HCT116 (cell line): ENCODE measurements at regions of chr1 and their contacts with region 1.

Region 1: DNA sequence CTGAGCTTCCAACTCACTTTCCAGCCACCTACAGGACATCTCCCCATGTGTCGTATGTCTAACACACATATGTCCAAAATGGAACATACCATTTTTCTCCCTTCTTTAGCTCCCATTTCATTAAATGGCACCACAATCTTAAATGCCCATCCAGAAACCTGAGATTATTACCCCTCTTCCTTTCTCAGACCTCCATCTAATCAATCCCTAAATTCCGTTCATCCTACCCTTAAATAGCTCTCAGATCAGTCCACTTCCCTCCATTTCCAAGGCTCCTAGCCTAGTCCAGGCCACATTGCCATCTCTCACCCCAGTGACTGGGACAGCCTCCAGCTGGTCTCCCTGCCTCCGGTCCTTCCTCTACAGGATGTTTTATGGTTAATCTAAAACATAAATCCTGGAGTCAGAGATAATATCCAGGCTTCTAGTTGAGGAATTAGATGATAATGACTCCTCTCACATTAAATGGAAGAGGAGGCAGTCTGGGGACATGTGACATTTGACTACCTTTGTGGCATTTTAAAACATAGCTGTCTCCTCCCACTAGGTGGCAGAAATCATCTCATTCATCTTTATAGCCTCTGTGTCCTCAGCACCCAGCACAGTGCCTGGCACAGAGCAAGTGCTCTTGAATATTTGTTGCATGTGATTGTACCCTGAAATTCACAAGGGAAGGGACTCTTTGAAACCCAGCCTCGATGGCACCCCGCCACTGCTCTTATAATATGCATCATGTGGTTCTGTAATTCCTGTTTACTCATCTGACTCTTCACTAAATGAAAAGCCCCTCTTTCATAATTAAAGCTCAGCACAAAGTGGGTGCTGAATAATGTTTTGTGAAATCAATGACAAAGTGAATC is 102.3 kb downstream of the TMEM53 start:
- DNase-seq: no peak
- ATAC-seq: peak; percentile 91
- H3K4me3 ChIP-seq: no peak overlapping the region
- H3K27ac ChIP-seq: no peak overlapping the region
- H3K4me1 ChIP-seq: peaks cover 7 to 16% of the 10 kb centered on the region in 2 experiments
- H3K27me3 ChIP-seq: no peaks in the 10 kb centered on the region
- CTCF ChIP-seq: peak; percentile 38 to 65 (median 65); a peak in 5 of 6 replicates
- POLR2A ChIP-seq: no peak
- RAD21 ChIP-seq: peak; percentile 47

Region 2: GRCh38 chr1:44553771-44554170 is 18.2 kb before region 1 on chr1:
- CTCF ChIA-PET with region 1: interaction called, 11 read pairs
- POLR2A ChIA-PET with region 1: no interaction called
- RAD21 ChIA-PET with region 1: no interaction called
- intact Hi-C with region 1: no loop called
- DNase-seq: peak; percentile 36
- ATAC-seq: peak; percentile 94
- H3K4me3 ChIP-seq: peak overlapping the region in 1 of 2 experiments; percentile 34; a peak in 2 of 4 replicates
- H3K27ac ChIP-seq: no peak overlapping the region; the same call in 1 of the 2 replicates
- H3K4me1 ChIP-seq: peaks cover 23 to 47% of the 10 kb centered on the region in 2 experiments
- H3K27me3 ChIP-seq: no peaks in the 10 kb centered on the region
- CTCF ChIP-seq: no peak
- POLR2A ChIP-seq: no peak
- RAD21 ChIP-seq: no peak

Region 3: DNA sequence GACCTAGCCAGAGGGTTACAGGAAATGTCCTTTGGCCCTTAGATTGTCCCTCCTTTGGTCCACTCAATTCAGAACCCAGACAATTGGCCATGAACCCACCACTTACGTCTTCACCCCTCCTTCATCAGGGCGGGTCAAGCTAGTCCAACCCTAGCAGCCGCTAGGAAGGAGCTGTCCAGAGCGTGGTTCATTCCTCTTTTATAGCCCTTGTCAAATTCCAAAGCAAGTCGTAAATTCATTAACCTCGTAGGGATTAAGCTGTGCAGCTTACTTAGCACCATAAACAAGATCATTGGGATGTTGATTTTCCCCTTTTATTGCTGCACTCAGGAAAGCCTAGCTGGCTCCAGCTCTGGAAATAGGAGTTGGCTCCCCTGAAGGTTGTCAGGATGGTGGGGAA is 12.2 kb after region 1 on chr1:
- CTCF ChIA-PET with region 1: interaction called, 14 read pairs
- POLR2A ChIA-PET with region 1: no interaction called
- RAD21 ChIA-PET with region 1: no interaction called
- intact Hi-C with region 1: no loop called
- DNase-seq: no peak
- ATAC-seq: peak; percentile 30; the same call in 1 of the 2 replicates
- H3K4me3 ChIP-seq: no peak overlapping the region
- H3K27ac ChIP-seq: no peak overlapping the region
- H3K4me1 ChIP-seq: peaks cover 0 to 8% of the 10 kb centered on the region in 2 experiments; a peak in 2 of 4 replicates
- H3K27me3 ChIP-seq: peaks cover 18% of the 10 kb centered on the region; the same call in 1 of the 2 replicates
- CTCF ChIP-seq: no peak
- POLR2A ChIP-seq: no peak
- RAD21 ChIP-seq: no peak